ENCODE measurements at regions of chr2 and their contacts with region 1.

Region 1: GRCh38 chr2:96344011-96344410 is 8.4 kb downstream of the NCAPH start:
- DNase-seq: peak; percentile 67 to 84 (median 72)
- H3K4me3 ChIP-seq: no peak overlapping the region
- H3K4me3 Mint-ChIP-seq: peak overlapping the region in 7 of 8 donors; percentile 15 to 81 (median 53)
- H3K27ac ChIP-seq: peak overlapping the region; percentile 68
- H3K27ac Mint-ChIP-seq: peak overlapping the region; percentile 82 to 96 (median 92)
- H3K4me1 ChIP-seq: peaks cover 55% of the 10 kb centered on the region
- H3K4me1 Mint-ChIP-seq: peaks cover 41 to 61% (median 47%) of the 10 kb centered on the region in 4 donors
- H3K27me3 ChIP-seq: no peaks in the 10 kb centered on the region
- H3K27me3 Mint-ChIP-seq: no peaks in the 10 kb centered on the region

Region 2: DNA sequence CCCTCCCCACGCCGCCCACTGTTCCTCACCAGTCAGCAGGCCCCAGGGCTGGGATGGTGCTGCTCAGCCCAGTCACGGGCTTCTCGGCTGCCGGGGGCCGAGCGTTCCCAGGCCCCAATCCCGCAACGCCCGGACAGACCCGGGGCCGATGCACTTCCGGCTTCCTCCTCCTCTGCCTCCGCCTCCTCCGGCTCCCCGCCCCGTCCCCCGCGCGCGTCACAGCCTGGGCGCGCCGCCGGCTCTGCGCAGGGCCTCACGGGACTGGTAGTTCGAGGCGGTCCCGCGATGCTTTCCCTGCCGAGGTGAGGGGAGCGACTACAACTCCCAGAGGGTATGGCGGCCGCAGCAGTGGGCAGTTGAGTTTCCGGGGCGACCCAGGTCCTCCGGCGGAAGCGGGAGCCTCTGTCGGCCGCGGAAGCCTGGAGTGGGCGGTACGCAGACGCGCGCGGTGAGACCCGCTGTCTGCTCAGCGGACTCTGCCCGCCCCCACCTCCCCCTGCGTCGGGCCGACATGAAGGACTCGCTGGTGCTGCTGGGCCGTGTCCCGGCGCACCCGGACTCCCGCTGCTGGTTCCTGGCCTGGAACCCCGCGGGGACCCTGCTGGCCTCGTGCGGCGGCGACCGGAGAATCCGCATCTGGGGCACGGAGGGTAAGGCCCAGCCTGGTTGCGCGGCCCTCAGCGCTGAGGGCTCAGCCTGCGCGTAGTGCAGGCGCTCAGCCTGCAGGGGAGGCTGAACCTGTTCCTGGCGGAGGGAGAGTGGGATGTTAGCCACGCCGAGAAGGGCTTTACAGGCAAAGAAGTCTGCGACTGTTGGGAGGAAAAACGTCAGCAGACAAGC is 78.0 kb before region 1 on chr2 and contains the starts of genes CIAO1 and TMEM127:
- CTCF ChIA-PET with region 1: interaction called, 3 read pairs
- POLR2A ChIA-PET with region 1: interaction called, 3 read pairs
- intact Hi-C with region 1: loop called (anchors 1 kb)
- DNase-seq: peak; percentile 97 to 98 (median 97)
- H3K4me3 ChIP-seq: peak within 1 kb of the TSS; percentile 85 to 97
- H3K4me3 Mint-ChIP-seq: peak within 1 kb of the TSS; percentile 91 to 99 (median 94)
- H3K27ac ChIP-seq: peak within 1 kb of the TSS; percentile 94
- H3K27ac Mint-ChIP-seq: peak within 1 kb of the TSS; percentile 80 to 99 (median 94)
- H3K4me1 ChIP-seq: peaks cover 49% of the 10 kb centered on the region
- H3K4me1 Mint-ChIP-seq: peaks cover 22 to 64% (median 48%) of the 10 kb centered on the region in 4 donors
- H3K27me3 ChIP-seq: no peaks in the 10 kb centered on the region
- H3K27me3 Mint-ChIP-seq: no peaks in the 10 kb centered on the region
- total RNA-seq, gene CIAO1: 78.3 to 87.3 TPM
- total RNA-seq, gene TMEM127: 45.1 to 45.6 TPM

Region 3: GRCh38 chr2:96305091-96305978 is 38.7 kb before region 1 on chr2 and contains the start of gene SNRNP200:
- CTCF ChIA-PET with region 1: interaction called, 24 read pairs
- POLR2A ChIA-PET with region 1: interaction called, 74 read pairs
- intact Hi-C with region 1: loop called (anchors 1 kb)
- DNase-seq: peak; percentile 91 to 95 (median 91)
- H3K4me3 ChIP-seq: peak within 1 kb of the TSS; percentile 80 to 99
- H3K4me3 Mint-ChIP-seq: peak within 1 kb of the TSS; percentile 97 to 100 (median 99)
- H3K27ac ChIP-seq: peak within 1 kb of the TSS; percentile 89
- H3K27ac Mint-ChIP-seq: peak within 1 kb of the TSS; percentile 98 to 100 (median 100)
- H3K4me1 ChIP-seq: peaks cover 48% of the 10 kb centered on the region
- H3K4me1 Mint-ChIP-seq: peaks cover 44 to 65% (median 54%) of the 10 kb centered on the region in 4 donors
- H3K27me3 ChIP-seq: no peaks in the 10 kb centered on the region
- H3K27me3 Mint-ChIP-seq: no peaks in the 10 kb centered on the region
- total RNA-seq, gene SNRNP200: 225 to 227 TPM

Region 4: DNA sequence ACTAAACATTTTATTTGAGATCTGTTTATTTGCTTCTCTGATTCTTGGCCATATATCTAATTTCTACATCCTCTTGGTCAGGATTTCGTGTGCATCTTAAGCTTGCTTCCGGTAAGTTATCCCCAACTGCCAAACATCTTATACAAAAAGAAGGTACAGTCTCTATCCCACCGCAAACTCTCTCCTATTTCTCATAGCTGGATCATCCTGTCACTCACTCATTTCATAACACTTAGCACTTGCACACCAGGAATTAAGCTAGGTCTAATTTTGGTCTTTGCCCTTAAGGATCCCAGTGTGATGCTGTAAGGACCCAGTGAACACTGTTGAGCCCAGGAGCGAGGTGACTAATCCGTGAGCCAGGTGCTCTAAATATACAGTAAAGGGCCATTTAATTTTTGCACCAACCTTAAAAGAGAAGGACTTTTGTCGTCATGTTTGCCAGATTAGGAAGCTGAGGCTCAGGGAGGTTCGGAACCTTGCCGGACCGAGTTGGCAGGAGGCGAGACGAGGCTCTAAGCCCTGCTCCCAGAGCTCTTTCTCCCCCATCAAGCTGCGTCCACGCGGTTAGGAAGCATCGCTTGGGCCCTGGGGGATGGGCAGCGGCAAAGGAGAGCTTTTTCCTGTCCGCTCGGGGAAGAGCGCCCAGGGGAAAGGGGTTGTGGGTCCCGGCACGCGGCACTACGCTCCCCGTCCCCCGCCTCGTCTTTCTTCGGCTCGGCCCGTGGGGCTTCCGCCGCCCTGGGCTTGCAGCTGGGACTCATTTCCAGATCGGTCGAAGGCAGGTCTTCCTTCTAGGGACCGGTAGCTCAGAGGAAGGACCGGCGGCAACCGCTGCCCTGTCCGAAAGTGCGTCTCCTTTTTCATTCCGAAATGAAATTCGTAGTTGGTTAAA is 23.0 kb before region 1 on chr2:
- CTCF ChIA-PET with region 1: interaction called, 62 read pairs
- POLR2A ChIA-PET with region 1: interaction called, 178 read pairs
- intact Hi-C with region 1: loop called (anchors 1 kb)
- DNase-seq: peak in 2 of 5 donors; percentile 5 to 6
- H3K4me3 ChIP-seq: peak overlapping the region; percentile 76 to 77
- H3K4me3 Mint-ChIP-seq: peak overlapping the region; percentile 88 to 95 (median 92)
- H3K27ac ChIP-seq: peak overlapping the region; percentile 72
- H3K27ac Mint-ChIP-seq: peak overlapping the region; percentile 50 to 97 (median 89)
- H3K4me1 ChIP-seq: peaks cover 64% of the 10 kb centered on the region
- H3K4me1 Mint-ChIP-seq: peaks cover 37 to 75% (median 59%) of the 10 kb centered on the region in 4 donors
- H3K27me3 ChIP-seq: no peaks in the 10 kb centered on the region
- H3K27me3 Mint-ChIP-seq: no peaks in the 10 kb centered on the region

Region 5: DNA sequence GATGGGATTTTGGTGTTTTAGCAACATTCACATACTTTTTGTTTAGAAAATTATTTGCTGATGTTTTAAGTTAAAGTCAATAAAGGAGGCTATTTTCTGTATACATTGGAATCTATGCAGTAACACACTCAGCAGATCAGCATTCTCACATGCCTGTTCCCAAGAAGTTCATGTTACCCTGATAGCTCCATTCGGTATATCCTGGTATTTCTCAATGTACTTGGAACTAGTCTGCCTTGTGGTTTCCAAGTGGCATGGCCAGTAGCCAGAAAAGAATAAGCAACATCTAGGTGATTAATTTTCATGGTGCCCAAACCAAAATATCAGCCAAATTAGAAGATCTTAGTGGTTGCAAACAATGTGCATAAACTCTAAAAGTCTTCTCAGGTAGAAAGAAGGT is 13.6 kb before region 1 on chr2:
- CTCF ChIA-PET with region 1: interaction called, 62 read pairs
- POLR2A ChIA-PET with region 1: interaction called, 178 read pairs
- intact Hi-C with region 1: loop called (anchors 1 kb)
- DNase-seq: no peak
- H3K4me3 ChIP-seq: no peak overlapping the region
- H3K4me3 Mint-ChIP-seq: no peak overlapping the region
- H3K27ac ChIP-seq: no peak overlapping the region
- H3K27ac Mint-ChIP-seq: no peak overlapping the region
- H3K4me1 ChIP-seq: peaks cover 32% of the 10 kb centered on the region
- H3K4me1 Mint-ChIP-seq: peaks cover 24 to 53% (median 43%) of the 10 kb centered on the region in 4 donors
- H3K27me3 ChIP-seq: no peaks in the 10 kb centered on the region
- H3K27me3 Mint-ChIP-seq: no peaks in the 10 kb centered on the region

Region 6: GRCh38 chr2:96739633-96740428 is 395.8 kb after region 1 on chr2 and contains the start of gene LMAN2L:
- CTCF ChIA-PET with region 1: no interaction called
- POLR2A ChIA-PET with region 1: no interaction called
- intact Hi-C with region 1: no loop called
- DNase-seq: peak; percentile 94 to 99 (median 98)
- H3K4me3 ChIP-seq: peak within 1 kb of the TSS; percentile 63 to 82
- H3K4me3 Mint-ChIP-seq: peak within 1 kb of the TSS; percentile 93 to 100 (median 98)
- H3K27ac ChIP-seq: peak within 1 kb of the TSS; percentile 75
- H3K27ac Mint-ChIP-seq: peak within 1 kb of the TSS; percentile 90 to 98 (median 97)
- H3K4me1 ChIP-seq: peaks cover 36% of the 10 kb centered on the region
- H3K4me1 Mint-ChIP-seq: peaks cover 24 to 53% (median 39%) of the 10 kb centered on the region in 4 donors
- H3K27me3 ChIP-seq: no peaks in the 10 kb centered on the region
- H3K27me3 Mint-ChIP-seq: no peaks in the 10 kb centered on the region
- total RNA-seq, gene LMAN2L: 10.1 to 12.6 TPM